CD4-positive, alpha-beta memory T cell (primary cell): ENCODE measurements at regions of chr1 and their contacts with region 1.

Region 1: GRCh38 chr1:207863893-207864535 is 46.9 kb downstream of the CD34 start:
- DNase-seq: peak; percentile 43 to 75 (median 49)
- H3K4me3 ChIP-seq: no peak overlapping the region
- H3K4me3 Mint-ChIP-seq: peak overlapping the region; percentile 45 to 89 (median 72)
- H3K27ac ChIP-seq: peak overlapping the region; percentile 48
- H3K27ac Mint-ChIP-seq: peak overlapping the region; percentile 73 to 95 (median 86)
- H3K4me1 ChIP-seq: peaks cover 88% of the 10 kb centered on the region
- H3K4me1 Mint-ChIP-seq: peaks cover 55 to 74% (median 60%) of the 10 kb centered on the region in 4 donors
- H3K27me3 ChIP-seq: no peaks in the 10 kb centered on the region
- H3K27me3 Mint-ChIP-seq: no peaks in the 10 kb centered on the region

Region 2: GRCh38 chr1:207848234-207848633 is 15.8 kb before region 1 on chr1:
- CTCF ChIA-PET with region 1: interaction called, 19 read pairs
- POLR2A ChIA-PET with region 1: interaction called, 18 read pairs
- intact Hi-C with region 1: loop called (anchors 2 kb)
- DNase-seq: no peak
- H3K4me3 ChIP-seq: no peak overlapping the region
- H3K4me3 Mint-ChIP-seq: peak overlapping the region in 7 of 8 donors; percentile 33 to 80 (median 71)
- H3K27ac ChIP-seq: no peak overlapping the region
- H3K27ac Mint-ChIP-seq: peak overlapping the region; percentile 8 to 89 (median 72)
- H3K4me1 ChIP-seq: peaks cover 77% of the 10 kb centered on the region
- H3K4me1 Mint-ChIP-seq: peaks cover 74 to 98% (median 87%) of the 10 kb centered on the region in 4 donors
- H3K27me3 ChIP-seq: no peaks in the 10 kb centered on the region
- H3K27me3 Mint-ChIP-seq: no peaks in the 10 kb centered on the region

Region 3: DNA sequence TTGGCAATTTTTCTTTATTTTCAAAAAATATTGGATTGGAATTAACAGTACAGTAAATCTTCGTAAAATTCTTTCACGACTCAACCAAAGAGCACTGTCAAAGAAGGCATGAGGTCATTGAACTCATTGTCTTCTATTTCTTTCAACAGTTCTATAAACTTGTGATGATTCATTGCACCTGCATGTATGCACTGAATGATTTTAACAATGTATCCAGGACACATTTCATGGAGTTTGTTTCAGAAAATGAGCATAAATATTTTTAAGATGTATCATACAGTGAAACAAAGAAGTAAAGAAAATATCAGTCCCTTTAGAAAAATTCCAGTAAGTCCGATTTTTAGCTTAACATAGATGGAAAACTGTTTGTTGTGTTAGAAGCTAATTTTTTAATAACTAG is 80.6 kb after region 1 on chr1:
- CTCF ChIA-PET with region 1: no interaction called
- POLR2A ChIA-PET with region 1: no interaction called
- intact Hi-C with region 1: no loop called
- DNase-seq: no peak
- H3K4me3 ChIP-seq: no peak overlapping the region
- H3K4me3 Mint-ChIP-seq: no peak overlapping the region
- H3K27ac ChIP-seq: no peak overlapping the region
- H3K27ac Mint-ChIP-seq: no peak overlapping the region
- H3K4me1 ChIP-seq: no peaks in the 10 kb centered on the region
- H3K4me1 Mint-ChIP-seq: no peaks in the 10 kb centered on the region
- H3K27me3 ChIP-seq: no peaks in the 10 kb centered on the region
- H3K27me3 Mint-ChIP-seq: peaks cover 24% of the 10 kb centered on the region in 2 donors